Activated CD8-positive, alpha-beta T cell treated with anti-CD3 and anti-CD28 coated beads, Interleukin-2, amount 10 ng/mL, durations not matched to agents 7 days and 5 days (primary cell): ENCODE measurements at regions of chr7 and their contacts with region 1.

Region 1: GRCh38 chr7:45033261-45033930 is 33.4 kb downstream of the CCM2 start:
- DNase-seq: peak; percentile 57
- ATAC-seq: peak; percentile 37
- H3K4me3 Mint-ChIP-seq: peak overlapping the region; percentile 63
- H3K27ac Mint-ChIP-seq: peak overlapping the region; percentile 71
- H3K4me1 Mint-ChIP-seq: peaks cover 84% of the 10 kb centered on the region
- H3K27me3 Mint-ChIP-seq: no peaks in the 10 kb centered on the region

Region 2: DNA sequence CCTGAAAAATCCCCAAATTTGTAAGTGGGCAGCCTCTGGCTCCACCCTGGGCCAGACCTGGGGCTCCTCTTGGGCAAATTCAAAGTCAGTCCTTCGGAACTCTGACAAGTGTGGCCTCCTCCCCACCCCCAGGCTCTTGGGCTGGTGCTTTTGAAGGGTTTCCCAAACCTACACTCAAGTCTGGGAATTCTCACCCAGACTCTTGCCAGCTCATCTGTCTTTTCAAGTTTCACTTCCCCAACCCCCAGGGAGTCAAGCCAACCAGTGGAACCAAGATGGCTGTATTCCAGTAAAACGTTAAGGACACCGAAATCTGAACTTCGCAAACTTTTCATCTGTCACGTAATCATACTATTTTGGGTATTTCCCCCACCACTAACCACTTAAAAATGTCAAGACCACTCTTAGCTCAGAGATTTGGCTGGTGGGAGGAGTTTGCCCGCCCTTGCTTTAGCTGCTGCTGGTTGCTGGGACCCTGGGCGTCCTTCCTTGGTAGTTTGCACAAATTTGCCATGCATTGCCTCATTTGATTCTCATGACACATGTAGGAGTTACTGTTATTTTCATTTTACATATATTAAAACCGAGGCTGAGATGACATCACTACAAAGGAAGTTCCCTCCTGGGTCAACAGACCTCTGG is 52.9 kb before region 1 on chr7:
- CTCF ChIA-PET with region 1: interaction called, 5 read pairs
- POLR2A ChIA-PET with region 1: interaction called, 125 read pairs
- DNase-seq: peak; percentile 76
- ATAC-seq: peak; percentile 11
- H3K4me3 Mint-ChIP-seq: peak overlapping the region; percentile 95
- H3K27ac Mint-ChIP-seq: peak overlapping the region; percentile 98
- H3K4me1 Mint-ChIP-seq: peaks cover 75% of the 10 kb centered on the region
- H3K27me3 Mint-ChIP-seq: no peaks in the 10 kb centered on the region